ENCODE measurements at regions of chr3 and their contacts with region 1.

Region 1: GRCh38 chr3:56928379-56929068 is 126.8 kb upstream of the ARHGEF3 start:
- DNase-seq: no peak
- ATAC-seq: no peak
- H3K4me3 Mint-ChIP-seq: no peak overlapping the region
- H3K27ac Mint-ChIP-seq: peak overlapping the region; percentile 44
- H3K4me1 Mint-ChIP-seq: peaks cover 50% of the 10 kb centered on the region
- H3K27me3 Mint-ChIP-seq: no peaks in the 10 kb centered on the region

Region 2: DNA sequence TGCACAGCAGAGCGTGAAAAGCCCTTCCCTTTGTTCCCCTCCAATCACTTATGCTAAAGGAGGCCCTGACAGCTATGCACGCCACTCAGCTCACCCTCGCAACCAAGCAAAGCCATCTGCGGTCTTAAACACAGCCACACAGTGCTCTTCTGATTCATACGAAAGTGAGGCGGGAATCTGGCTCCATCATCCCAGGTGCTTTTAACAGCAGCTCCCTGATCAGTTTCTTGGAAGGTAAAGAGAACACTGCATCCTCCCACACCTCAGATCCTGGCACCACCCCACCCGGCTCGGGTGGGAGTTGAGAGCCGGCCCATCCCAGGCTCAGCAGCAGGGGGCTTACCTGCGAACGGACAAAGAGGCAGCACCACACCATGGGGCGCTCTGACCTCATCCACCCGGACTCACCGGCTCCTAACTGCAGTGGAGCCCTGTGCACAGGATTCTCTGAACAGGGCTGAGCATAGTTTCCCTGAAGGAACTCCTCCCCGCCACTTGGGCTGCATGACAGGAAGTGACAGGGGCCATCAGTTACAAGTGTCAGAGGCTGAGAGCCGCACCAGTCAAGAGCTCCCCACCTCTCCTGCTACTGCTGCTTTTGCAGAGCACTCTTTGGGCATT is 12.4 kb before region 1 on chr3:
- CTCF ChIA-PET with region 1: interaction called, 29 read pairs
- DNase-seq: peak; percentile 94
- ATAC-seq: peak; percentile 88
- H3K4me3 Mint-ChIP-seq: peak overlapping the region; percentile 96
- H3K27ac Mint-ChIP-seq: peak overlapping the region; percentile 100
- H3K4me1 Mint-ChIP-seq: peaks cover 68% of the 10 kb centered on the region
- H3K27me3 Mint-ChIP-seq: no peaks in the 10 kb centered on the region

Region 3: DNA sequence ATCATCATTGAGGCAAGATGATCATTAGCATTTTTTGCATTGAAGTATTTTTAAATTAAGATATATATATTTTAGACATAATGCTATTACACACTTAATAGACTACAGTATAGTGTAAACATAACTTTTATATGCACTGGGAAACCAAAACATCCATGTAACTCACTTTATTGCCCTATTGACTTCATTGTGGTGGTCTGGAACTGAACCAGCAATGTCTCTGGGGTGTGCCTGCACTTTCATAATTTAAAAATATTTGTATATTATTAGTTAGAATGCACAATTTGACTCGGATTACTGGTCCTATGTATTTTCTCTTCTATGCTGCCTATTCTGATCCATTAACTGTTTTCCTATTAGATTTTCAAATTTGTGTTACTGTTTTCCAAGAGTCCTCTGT is 22.8 kb after region 1 on chr3:
- CTCF ChIA-PET with region 1: no interaction called
- DNase-seq: no peak
- ATAC-seq: no peak
- H3K4me3 Mint-ChIP-seq: no peak overlapping the region
- H3K27ac Mint-ChIP-seq: no peak overlapping the region
- H3K4me1 Mint-ChIP-seq: no peaks in the 10 kb centered on the region
- H3K27me3 Mint-ChIP-seq: peaks cover 2% of the 10 kb centered on the region

Region 4: GRCh38 chr3:56962206-56962605 is 33.7 kb after region 1 on chr3:
- CTCF ChIA-PET with region 1: no interaction called
- DNase-seq: no peak
- ATAC-seq: no peak
- H3K4me3 Mint-ChIP-seq: no peak overlapping the region
- H3K27ac Mint-ChIP-seq: no peak overlapping the region
- H3K4me1 Mint-ChIP-seq: peaks cover 9% of the 10 kb centered on the region
- H3K27me3 Mint-ChIP-seq: no peaks in the 10 kb centered on the region

Region 5: GRCh38 chr3:57464801-57465200 is 536.3 kb after region 1 on chr3:
- CTCF ChIA-PET with region 1: no interaction called
- DNase-seq: no peak
- ATAC-seq: no peak
- H3K4me3 Mint-ChIP-seq: no peak overlapping the region
- H3K27ac Mint-ChIP-seq: no peak overlapping the region
- H3K4me1 Mint-ChIP-seq: no peaks in the 10 kb centered on the region
- H3K27me3 Mint-ChIP-seq: peaks cover 15% of the 10 kb centered on the region

Region 6: GRCh38 chr3:57942872-57943283 is 1014.4 kb after region 1 on chr3:
- CTCF ChIA-PET with region 1: no interaction called
- DNase-seq: no peak
- ATAC-seq: no peak
- H3K4me3 Mint-ChIP-seq: no peak overlapping the region
- H3K27ac Mint-ChIP-seq: no peak overlapping the region
- H3K4me1 Mint-ChIP-seq: no peaks in the 10 kb centered on the region
- H3K27me3 Mint-ChIP-seq: no peaks in the 10 kb centered on the region

Measured in activated CD8-positive, alpha-beta memory T cell treated with anti-CD3 and anti-CD28 coated beads, Interleukin-2, amount 10 ng/mL, durations not matched to agents 7 days and 5 days (primary cell).